ENCODE measurements at regions of chr6 and their contacts with region 1.

Region 1: DNA sequence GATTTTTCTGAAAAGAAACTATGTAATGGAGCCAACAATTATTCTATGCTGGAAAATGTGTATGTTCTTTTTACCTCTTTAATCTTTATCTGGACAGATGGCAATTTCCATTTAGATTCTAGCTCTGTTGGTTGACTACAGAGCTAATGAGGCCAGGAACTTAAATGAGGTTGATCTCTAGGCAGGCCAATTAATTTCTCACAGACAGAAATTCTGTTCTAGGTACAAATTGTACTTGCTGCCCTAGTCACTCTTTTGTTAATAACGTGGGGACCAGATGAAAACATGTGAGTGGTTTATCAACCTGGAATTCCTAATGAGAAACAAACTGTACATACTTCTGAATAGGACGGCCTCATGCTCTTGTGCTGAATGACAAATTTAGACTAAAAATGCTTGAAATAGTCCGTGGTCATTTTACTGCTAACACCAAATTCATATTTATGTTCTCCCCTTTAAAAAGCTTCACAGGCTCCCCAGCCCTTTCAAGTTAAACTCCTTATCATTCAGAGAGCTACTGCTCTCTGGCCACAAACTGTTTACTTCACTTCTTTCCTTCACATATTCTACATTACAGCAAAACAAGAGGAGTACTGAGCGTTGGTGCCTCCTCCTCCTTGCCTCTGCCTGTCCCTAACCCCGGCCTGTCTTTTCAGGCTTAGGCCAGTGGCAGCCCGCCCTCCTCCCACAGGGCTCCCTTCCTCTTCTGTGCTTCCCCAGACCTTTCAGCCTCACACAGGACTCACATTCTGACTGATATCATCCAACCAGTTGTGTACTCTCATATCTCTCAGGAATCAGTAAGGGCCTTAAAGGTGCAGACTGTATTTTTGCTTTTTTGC is 41.4 kb downstream of the DTNBP1 start:
- DNase-seq: peak in 1 of 2 donors; percentile 37
- H3K4me3 ChIP-seq: no peak overlapping the region
- H3K27ac ChIP-seq: peak overlapping the region in 1 of 2 donors; percentile 6
- H3K4me1 ChIP-seq: peaks cover 0 to 24% (median 0%) of the 10 kb centered on the region in 4 donors
- H3K27me3 ChIP-seq: no peaks in the 10 kb centered on the region
- CTCF ChIP-seq: no peak

Region 2: GRCh38 chr6:15504581-15505350 is 116.7 kb before region 1 on chr6:
- intact Hi-C with region 1: loop called (anchors 10 kb)
- DNase-seq: peak; percentile 63 to 85
- H3K4me3 ChIP-seq: peak overlapping the region; percentile 31 to 39
- H3K27ac ChIP-seq: peak overlapping the region; percentile 45 to 50
- H3K4me1 ChIP-seq: peaks cover 3 to 40% (median 22%) of the 10 kb centered on the region in 4 donors
- H3K27me3 ChIP-seq: no peaks in the 10 kb centered on the region
- CTCF ChIP-seq: no peak

Region 3: GRCh38 chr6:15522427-15522826 is 99.0 kb before region 1 on chr6:
- intact Hi-C with region 1: no loop called
- DNase-seq: no peak
- H3K4me3 ChIP-seq: no peak overlapping the region
- H3K27ac ChIP-seq: peak overlapping the region in 1 of 2 donors; percentile 15
- H3K4me1 ChIP-seq: no peaks in the 10 kb centered on the region
- H3K27me3 ChIP-seq: no peaks in the 10 kb centered on the region
- CTCF ChIP-seq: no peak

Region 4: GRCh38 chr6:15715060-15715459 is 93.6 kb after region 1 on chr6:
- intact Hi-C with region 1: no loop called
- DNase-seq: no peak
- H3K4me3 ChIP-seq: no peak overlapping the region
- H3K27ac ChIP-seq: no peak overlapping the region
- H3K4me1 ChIP-seq: peaks cover 0 to 14% (median 11%) of the 10 kb centered on the region in 4 donors
- H3K27me3 ChIP-seq: no peaks in the 10 kb centered on the region
- CTCF ChIP-seq: no peak

Measured in tibial artery (tissue), 4 donors.